ENCODE measurements at regions of chr7 and their contacts with region 1.

Region 1: GRCh38 chr7:3989723-3990122 is 688.7 kb downstream of the SDK1 start:
- DNase-seq: peak; percentile 41

Region 2: GRCh38 chr7:2873686-2874551 is 1115.8 kb before region 1 on chr7:
- intact Hi-C with region 1: no loop called
- DNase-seq: no peak

Region 3: DNA sequence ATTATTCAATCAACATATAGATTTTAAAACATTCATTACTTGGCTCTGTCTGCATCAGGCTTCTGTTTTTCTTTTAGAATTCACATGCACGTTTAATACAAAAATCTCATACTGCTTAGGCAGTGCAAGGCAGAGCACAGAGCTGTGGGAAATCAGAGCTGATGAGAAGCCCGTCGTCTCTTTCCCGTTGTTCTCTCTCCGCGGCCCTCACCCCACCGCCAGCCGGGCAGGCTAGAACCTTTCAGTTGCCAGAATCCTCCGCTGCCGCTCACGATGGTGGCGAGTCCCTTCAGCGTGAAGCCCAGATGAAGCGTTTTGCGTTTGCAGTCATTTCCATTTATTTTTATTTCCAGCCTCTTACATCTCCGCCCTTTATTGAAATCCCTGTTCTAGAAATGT is 40.5 kb before region 1 on chr7:
- intact Hi-C with region 1: loop called in 1 of 2 experiments (anchors 2 kb)
- DNase-seq: no peak

Region 4: GRCh38 chr7:4406288-4407058 is 416.8 kb after region 1 on chr7:
- intact Hi-C with region 1: no loop called
- DNase-seq: no peak

Measured in posterior vena cava (tissue), 2 donors.